ENCODE measurements at regions of chr15 and their contacts with region 1.

Region 1: GRCh38 chr15:90818251-90819210 is 49.9 kb upstream of the FURIN start:
- DNase-seq: peak; percentile 60
- ATAC-seq: peak; percentile 95
- H3K4me3 Mint-ChIP-seq: peak overlapping the region; percentile 41
- H3K27ac Mint-ChIP-seq: peak overlapping the region; percentile 66
- H3K4me1 Mint-ChIP-seq: peaks cover 46% of the 10 kb centered on the region
- H3K27me3 Mint-ChIP-seq: no peaks in the 10 kb centered on the region
- CTCF ChIP-seq: no peak

Region 2: DNA sequence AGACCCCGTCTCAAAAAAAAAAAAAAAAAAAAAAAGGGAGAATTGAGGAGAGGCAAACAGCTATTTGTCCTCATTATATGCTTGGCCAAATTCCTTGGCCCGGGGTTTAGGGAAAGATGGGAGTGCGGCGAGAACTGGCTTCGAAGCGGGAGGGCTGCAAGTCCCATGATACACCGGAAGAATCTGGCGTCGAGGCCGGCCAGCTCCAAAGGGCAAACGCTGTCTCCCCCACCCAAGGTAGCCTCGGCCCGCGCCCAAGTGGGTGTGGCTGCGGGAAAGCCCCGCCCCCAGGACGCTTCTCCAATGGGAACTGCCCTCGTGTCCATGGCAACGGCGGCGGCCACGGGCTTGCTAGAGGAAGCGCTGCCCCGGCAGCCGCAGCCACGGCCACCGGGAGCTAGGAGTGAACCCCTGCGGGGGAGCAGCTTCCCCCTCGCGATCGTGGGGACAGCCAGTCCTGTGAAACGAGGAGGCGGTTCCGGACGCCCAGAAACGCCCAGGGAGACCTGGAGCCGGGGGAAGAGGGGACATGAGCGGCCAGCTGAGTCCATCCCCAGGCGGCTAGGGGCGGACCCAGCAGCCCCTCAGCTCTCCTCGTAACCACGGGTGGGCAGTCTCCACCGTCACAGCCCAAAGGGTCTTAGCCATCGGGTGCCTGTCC is 569.2 kb before region 1 on chr15 and contains the start of gene TTLL13:
- CTCF ChIA-PET with region 1: no interaction called
- POLR2A ChIA-PET with region 1: no interaction called
- intact Hi-C with region 1: no loop called
- DNase-seq: peak; percentile 60
- ATAC-seq: peak; percentile 79
- H3K4me3 Mint-ChIP-seq: peak within 1 kb of the TSS; percentile 76
- H3K27ac Mint-ChIP-seq: peak within 1 kb of the TSS; percentile 4
- H3K4me1 Mint-ChIP-seq: peaks cover 14% of the 10 kb centered on the region
- H3K27me3 Mint-ChIP-seq: no peaks in the 10 kb centered on the region
- CTCF ChIP-seq: no peak
- total RNA-seq, gene TTLL13: 0.49 and 2.2 TPM in 2 replicates

Region 3: DNA sequence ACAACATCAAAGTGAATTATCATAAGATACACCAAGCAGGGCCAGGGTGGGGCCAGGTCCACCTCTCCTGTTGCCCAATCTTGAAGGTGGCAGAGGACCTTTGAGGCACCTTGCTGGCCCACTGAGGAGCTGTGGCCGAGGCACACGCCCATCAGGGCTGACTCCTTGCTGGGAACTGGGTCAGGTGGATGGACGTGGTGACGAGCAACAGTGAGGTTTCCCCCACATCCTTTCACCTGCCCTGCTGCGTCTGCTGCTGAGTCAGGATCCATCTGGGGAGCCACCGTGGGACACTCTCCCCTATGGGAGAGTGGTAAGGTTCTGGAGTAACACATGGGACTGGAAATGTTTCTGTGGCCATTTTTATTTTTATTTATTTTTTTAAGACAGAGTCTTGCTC is 32.6 kb after region 1 on chr15:
- CTCF ChIA-PET with region 1: interaction called, 3 read pairs
- POLR2A ChIA-PET with region 1: interaction called, 5 read pairs
- intact Hi-C with region 1: loop called (anchors 1 kb)
- DNase-seq: no peak
- ATAC-seq: no peak
- H3K4me3 Mint-ChIP-seq: peak overlapping the region; percentile 53
- H3K27ac Mint-ChIP-seq: no peak overlapping the region
- H3K4me1 Mint-ChIP-seq: peaks cover 57% of the 10 kb centered on the region
- H3K27me3 Mint-ChIP-seq: no peaks in the 10 kb centered on the region
- CTCF ChIP-seq: no peak

Measured in activated B cell treated with CpG ODN at 0.5 μM for 24 hours (primary cell).